Activated T-helper 1 cell treated with anti-CD3 and anti-CD28 coated beads, Interleukin-12 subunit alpha, Interleukin-12 subunit beta, Interleukin-2, Interleukin-4 antibody, amounts not matched to agents 30 ng/mL and 10 ng/mL and 1 ng/mL, durations not matched to agents 14 hours and 24 hours and 36 hours (primary cell): ENCODE measurements at regions of chr1 and their contacts with region 1.

Region 1: DNA sequence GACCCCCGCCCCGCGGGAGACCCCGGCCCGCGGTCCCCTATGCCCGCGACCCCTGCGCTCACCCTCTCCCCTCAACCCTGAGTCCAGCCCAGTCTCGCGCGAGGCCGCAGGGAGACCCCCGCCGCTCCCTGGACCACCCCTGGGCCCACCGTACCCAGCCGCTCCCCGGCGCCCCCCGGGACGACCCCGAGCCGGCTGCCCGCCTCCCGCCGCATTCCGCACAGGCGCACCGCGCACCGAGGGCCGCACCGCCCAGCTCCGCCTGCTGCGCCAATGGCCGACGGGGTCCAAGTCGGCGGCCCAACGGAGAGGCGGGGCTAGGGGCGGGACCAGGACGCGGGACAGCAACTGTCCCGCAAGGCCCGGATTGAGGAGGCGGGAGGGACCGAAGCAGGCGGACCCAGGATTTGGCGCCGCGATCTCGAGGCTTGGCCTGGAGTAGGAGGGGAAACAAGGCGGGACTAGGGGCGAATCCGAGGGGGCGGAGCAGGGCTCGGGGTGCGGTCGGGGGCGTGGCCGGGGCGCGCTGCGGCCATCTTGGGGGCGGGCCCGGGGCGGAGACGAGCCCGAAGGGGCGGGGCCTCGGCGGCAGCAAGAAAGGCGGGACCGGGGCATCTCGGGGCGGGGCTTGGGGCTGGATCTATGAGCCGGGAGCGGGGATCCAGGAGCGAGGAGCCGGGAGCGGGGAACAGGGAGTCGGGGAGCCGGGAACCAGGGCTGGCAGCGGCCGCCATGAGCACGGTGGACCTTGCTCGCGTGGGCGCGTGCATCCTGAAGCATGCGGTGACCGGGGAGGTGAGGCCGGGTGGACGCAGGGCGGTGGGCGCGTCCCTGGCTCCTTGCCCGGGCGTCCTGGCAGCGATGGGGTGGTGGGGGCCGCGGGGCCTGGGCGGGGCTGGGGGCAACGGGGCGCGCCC is at the start of gene PRXL2B:
- DNase-seq: peak; percentile 98
- H3K4me3 Mint-ChIP-seq: peak within 1 kb of the TSS; percentile 86
- H3K27ac Mint-ChIP-seq: peak within 1 kb of the TSS; percentile 94
- H3K4me1 Mint-ChIP-seq: peaks cover 40% of the 10 kb centered on the region
- H3K27me3 Mint-ChIP-seq: no peaks in the 10 kb centered on the region
- total RNA-seq, gene PRXL2B: 39.5 and 42.1 TPM in 2 replicates

Region 2: DNA sequence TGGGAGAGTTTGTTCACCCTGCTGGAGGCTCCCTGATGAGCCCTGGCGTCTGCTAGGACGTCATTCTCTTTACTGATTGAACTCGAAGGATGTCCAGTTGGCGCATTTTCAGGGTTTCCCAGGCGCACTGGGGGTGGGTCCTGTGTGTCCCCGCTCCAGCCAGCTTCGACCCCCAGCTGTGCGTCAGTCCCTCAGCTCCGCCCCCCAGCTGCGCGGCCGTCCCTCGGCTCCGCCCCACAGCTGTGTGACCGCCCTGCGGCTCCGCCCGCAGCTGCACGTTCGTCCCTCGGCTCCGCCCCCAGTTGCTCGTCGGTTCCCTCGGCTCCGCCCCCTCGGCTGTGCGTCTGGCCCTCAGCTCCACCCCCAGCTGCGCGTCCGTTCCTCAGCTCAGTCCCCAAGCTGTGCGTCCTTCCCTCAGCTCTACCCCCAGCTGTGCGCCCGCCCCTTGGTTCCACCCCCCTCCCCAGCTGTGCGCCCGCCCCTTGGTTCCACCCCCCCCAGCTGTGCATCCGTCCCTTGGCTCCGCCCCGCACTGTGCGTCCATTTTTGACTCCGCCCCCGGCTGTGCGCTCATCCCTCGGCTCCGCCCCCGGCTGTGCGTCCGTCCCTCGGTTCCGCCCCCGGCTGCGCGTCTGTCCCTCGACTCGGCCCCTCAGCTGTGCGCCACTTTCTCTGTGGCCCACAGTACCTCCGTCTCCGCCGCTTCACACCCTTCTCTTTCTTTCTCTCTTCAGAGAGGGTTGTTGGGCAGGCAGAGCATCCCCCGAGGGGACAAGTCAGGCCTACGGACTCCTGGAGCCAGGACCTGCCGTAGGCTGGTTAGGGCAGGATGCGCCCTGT is 453.2 kb before region 1 on chr1:
- intact Hi-C with region 1: loop called (anchors 1 kb)
- DNase-seq: peak; percentile 95
- H3K4me3 Mint-ChIP-seq: peak overlapping the region; percentile 73
- H3K27ac Mint-ChIP-seq: peak overlapping the region; percentile 48
- H3K4me1 Mint-ChIP-seq: peaks cover 6% of the 10 kb centered on the region
- H3K27me3 Mint-ChIP-seq: peaks cover 8% of the 10 kb centered on the region

Region 3: DNA sequence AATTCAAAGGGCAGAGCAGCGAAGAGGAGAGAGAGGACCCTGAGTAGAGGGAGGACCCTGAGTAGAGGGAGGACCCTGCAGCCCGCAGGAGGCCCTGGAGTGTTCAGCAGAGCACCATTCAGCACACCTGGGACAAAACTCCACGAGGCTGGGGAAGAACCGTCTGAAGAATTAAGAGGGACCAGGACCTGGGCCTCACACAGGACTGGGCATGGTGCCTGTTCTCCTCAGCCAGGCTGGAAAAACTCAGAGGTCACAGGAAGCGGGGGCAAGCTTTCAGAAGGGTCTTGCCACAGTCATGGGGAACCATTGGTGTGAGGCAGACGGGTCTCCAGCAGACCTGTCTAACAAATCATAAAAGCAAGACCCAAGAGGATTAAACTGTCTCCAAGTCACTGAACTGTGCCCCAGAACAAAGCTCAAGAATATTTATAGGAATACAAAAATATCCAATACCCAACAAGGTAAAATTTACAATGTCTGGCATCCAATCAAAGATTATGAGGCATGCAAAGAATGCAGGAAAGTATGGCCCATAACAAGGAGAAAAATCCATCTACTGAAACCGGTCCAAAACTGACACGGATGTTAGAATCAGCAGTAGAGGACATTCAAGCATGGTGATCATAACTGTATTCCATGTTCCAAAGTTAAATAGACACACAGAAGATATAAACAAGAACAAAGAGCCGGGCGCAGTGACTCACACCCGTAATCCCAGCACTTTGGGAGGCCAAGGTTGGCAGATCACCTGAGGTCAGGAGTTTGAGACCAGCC is 225.6 kb before region 1 on chr1:
- intact Hi-C with region 1: no loop called
- DNase-seq: no peak
- H3K4me3 Mint-ChIP-seq: no peak overlapping the region
- H3K27ac Mint-ChIP-seq: no peak overlapping the region
- H3K4me1 Mint-ChIP-seq: no peaks in the 10 kb centered on the region
- H3K27me3 Mint-ChIP-seq: no peaks in the 10 kb centered on the region

Region 4: GRCh38 chr1:2391041-2391930 is 195.1 kb before region 1 on chr1 and contains the starts of genes MORN1 and RER1:
- intact Hi-C with region 1: loop called (anchors 1 kb)
- DNase-seq: peak; percentile 99
- H3K4me3 Mint-ChIP-seq: peak within 1 kb of the TSS; percentile 88
- H3K27ac Mint-ChIP-seq: peak within 1 kb of the TSS; percentile 82
- H3K4me1 Mint-ChIP-seq: peaks cover 28% of the 10 kb centered on the region
- H3K27me3 Mint-ChIP-seq: no peaks in the 10 kb centered on the region
- total RNA-seq, gene MORN1: 8.4 and 8.6 TPM in 2 replicates
- total RNA-seq, gene RER1: 161 and 177 TPM in 2 replicates

Region 5: DNA sequence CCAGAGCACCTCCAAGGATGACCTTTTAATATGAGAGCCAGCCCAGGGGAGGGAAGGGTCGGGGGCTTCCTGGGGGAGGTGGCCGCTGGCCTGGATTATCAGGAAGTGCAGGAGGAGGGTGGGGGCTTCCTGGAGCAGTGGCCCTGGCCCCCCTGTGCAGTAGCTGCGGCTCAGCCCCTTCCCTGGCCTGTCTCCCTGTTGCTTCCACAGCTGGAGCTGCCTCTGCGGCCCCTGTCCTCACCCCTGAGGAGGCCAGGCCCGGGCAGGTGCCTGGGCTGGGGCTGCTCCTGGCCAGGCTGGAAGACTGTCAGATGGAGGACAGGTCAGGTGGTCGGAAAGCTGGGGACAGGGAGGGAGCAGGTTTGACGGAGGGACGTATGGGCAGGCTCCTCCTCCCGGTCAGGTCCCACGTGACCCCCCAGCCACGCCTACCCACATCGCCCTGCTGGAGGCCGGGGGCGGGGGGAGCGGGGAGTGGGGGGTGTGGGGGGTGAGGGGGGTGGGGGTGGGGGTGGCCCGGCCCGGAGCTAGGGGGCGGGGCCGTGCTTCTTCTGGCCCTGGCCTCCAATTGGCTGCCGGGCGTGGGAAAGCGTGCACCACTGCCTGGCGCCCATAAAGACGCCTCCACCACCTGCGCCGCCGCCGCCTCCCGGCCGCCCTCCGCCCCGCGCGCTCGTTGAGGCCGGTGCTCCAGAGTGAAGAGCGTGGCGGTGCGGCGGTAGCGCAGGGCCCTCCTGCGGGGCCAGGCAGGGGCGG is 40.5 kb before region 1 on chr1:
- intact Hi-C with region 1: loop called (anchors 1 kb)
- DNase-seq: peak; percentile 87
- H3K4me3 Mint-ChIP-seq: peak overlapping the region; percentile 91
- H3K27ac Mint-ChIP-seq: peak overlapping the region; percentile 61
- H3K4me1 Mint-ChIP-seq: peaks cover 7% of the 10 kb centered on the region
- H3K27me3 Mint-ChIP-seq: peaks cover 13% of the 10 kb centered on the region

Region 6: DNA sequence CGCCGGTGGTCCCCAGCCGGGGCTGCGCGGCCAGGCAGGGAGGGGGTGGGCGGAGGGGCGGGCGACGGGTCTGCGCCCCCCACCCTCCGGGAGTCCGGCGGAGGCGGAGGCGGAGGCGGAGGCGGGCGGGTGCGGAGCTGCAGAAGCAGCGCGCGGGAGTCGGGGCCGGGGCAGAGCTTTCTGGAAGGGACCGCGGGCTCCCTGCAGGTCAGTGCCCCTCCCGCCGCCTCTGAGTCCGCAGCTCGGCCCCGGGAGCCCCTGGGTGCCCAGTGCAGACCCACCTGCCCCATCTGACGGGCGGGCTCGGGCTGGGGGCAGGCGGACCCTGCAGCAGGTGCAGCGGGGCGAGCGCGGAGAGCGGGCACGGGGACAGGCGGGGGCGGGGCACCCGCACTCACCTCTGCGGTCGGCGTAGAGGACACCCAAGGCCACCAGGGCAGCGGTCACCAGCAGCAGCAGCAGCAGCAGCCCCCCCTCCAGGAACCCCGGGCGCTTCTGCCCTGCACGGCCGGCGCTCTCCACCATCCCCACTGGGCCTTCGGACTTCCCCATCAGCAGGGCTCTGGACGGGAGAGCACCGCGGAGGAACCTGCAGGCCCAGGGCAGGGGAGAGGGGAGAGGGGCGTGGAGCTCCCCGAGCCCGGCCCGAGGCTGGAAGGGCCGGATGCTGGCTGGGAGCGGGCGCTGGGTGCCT is 42.7 kb after region 1 on chr1:
- intact Hi-C with region 1: no loop called
- DNase-seq: no peak
- H3K4me3 Mint-ChIP-seq: no peak overlapping the region
- H3K27ac Mint-ChIP-seq: no peak overlapping the region
- H3K4me1 Mint-ChIP-seq: no peaks in the 10 kb centered on the region
- H3K27me3 Mint-ChIP-seq: peaks cover 34% of the 10 kb centered on the region

Region 7: GRCh38 chr1:2642560-2643413 is 56.4 kb after region 1 on chr1:
- intact Hi-C with region 1: loop called (anchors 1 kb)
- DNase-seq: peak; percentile 93
- H3K4me3 Mint-ChIP-seq: peak overlapping the region; percentile 85
- H3K27ac Mint-ChIP-seq: peak overlapping the region; percentile 93
- H3K4me1 Mint-ChIP-seq: no peaks in the 10 kb centered on the region
- H3K27me3 Mint-ChIP-seq: no peaks in the 10 kb centered on the region

Region 8: DNA sequence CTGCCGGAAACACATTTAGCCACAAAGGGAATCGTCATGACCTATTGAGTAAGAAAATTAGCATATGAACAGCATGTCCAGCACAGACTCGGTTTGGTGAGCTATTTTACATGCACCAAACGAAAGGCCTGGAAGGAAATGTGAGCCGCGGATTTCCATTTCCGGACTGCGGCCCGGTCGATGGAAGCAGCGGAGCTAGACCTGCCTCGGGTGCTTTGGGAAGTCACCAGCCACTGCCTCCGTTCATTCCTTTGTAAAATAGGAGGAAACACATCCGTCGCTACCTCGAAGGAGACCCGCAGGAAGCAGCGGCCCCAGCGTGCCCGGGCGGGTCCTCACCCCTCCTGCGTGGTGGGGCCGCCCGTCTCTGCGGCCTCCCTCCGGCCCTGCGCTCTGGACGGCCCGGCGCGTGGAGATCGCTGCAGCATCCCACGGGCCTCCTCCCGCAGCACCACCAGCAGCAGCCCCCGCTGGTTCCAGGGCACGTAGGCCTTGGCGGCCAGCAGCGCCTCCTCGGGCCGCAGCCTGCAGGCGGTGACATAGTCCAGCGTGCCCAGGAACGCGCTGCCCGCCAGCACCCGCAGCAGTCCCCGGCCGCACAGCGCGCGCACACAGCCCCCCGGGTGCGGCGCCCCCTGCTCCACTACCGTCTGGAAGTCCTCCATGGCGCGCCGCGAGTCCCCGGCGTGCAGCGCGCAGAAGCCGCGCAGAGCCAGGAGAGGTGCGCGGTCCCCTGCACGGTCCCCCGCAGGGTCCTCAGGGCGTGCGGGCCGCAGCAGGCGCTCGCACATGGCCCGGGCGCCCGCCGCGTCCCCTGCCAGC is 203.0 kb after region 1 on chr1:
- intact Hi-C with region 1: no loop called
- DNase-seq: no peak
- H3K4me3 Mint-ChIP-seq: no peak overlapping the region
- H3K27ac Mint-ChIP-seq: no peak overlapping the region
- H3K4me1 Mint-ChIP-seq: peaks cover 5% of the 10 kb centered on the region
- H3K27me3 Mint-ChIP-seq: peaks cover 16% of the 10 kb centered on the region